ENCODE measurements at regions of chr17 and their contacts with region 1.

Region 1: GRCh38 chr17:80364216-80364618 is 50.8 kb upstream of the ENDOV start:
- DNase-seq: peak; percentile 59
- H3K4me3 ChIP-seq: no peak overlapping the region
- H3K27ac ChIP-seq: no peak overlapping the region
- H3K4me1 ChIP-seq: no peaks in the 10 kb centered on the region
- H3K27me3 ChIP-seq: no peaks in the 10 kb centered on the region
- CTCF ChIP-seq: peak; percentile 64

Region 2: DNA sequence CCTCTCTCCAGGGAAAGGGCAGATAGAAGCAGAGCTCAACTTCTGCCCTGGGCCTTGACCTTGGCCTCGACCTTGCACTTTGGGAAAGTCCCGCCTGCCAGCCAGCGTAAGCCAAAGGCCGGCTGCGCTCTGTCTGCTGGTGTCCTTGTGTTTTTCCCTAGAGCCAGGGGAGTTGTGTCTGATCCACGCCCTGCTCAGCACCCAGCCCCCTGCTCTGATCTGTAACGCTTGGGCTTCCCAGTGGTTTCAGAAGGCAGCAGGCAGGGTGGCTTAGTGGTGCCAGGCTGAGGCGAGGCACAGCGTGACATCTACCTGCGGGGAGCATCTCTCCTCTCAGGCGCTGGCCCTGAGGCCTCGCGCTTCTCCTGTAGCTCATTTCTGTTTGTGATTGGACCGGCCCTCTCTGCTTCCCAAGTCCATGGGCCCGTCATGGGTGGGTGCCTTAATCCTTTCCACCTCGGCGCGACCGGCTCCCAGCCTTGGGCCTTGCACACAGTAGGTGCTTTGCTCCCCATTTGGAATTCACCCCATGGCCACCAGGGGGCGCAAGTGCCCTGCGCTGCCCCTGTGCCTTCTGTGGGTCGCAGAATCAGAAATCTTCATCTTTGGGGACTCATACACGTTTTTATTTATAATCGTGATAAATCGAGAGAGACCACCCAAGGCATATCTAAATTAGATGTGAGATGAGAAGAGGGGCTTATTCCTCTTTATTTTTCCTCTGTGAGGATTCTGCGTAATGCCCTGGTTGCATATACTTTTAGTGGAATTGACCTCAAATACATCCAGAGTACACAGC is 168.3 kb before region 1 on chr17:
- CTCF ChIA-PET with region 1: interaction called, 10 read pairs
- POLR2A ChIA-PET with region 1: no interaction called
- intact Hi-C with region 1: loop called (anchors 2 kb)
- DNase-seq: peak; percentile 51
- H3K4me3 ChIP-seq: no peak overlapping the region
- H3K27ac ChIP-seq: no peak overlapping the region
- H3K4me1 ChIP-seq: no peaks in the 10 kb centered on the region
- H3K27me3 ChIP-seq: no peaks in the 10 kb centered on the region
- CTCF ChIP-seq: peak; percentile 99

Region 3: GRCh38 chr17:80377798-80378197 is 13.6 kb after region 1 on chr17:
- CTCF ChIA-PET with region 1: no interaction called
- POLR2A ChIA-PET with region 1: no interaction called
- intact Hi-C with region 1: no loop called
- DNase-seq: no peak
- H3K4me3 ChIP-seq: no peak overlapping the region
- H3K27ac ChIP-seq: no peak overlapping the region
- H3K4me1 ChIP-seq: no peaks in the 10 kb centered on the region
- H3K27me3 ChIP-seq: no peaks in the 10 kb centered on the region
- CTCF ChIP-seq: no peak

Measured in A673 (cell line).